Mammary epithelial cell (primary cell): ENCODE measurements at regions of chr6 and their contacts with region 1.

Region 1: GRCh38 chr6:3281631-3282475 is 23.1 kb downstream of the PSMG4 start:
- DNase-seq: peak; percentile 92
- H3K4me3 ChIP-seq: no peak overlapping the region
- H3K27ac ChIP-seq: no peak overlapping the region
- H3K4me1 ChIP-seq: peaks cover 15% of the 10 kb centered on the region
- H3K27me3 ChIP-seq: no peaks in the 10 kb centered on the region
- CTCF ChIP-seq: peak in 1 of 2 donors; percentile 7

Region 2: GRCh38 chr6:3324262-3324942 is 42.5 kb after region 1 on chr6:
- CTCF ChIA-PET with region 1: no interaction called
- dilution Hi-C with region 1: no loop called
- in situ Hi-C with region 1: no loop called
- intact Hi-C with region 1: no loop called
- DNase-seq: peak; percentile 93
- H3K4me3 ChIP-seq: no peak overlapping the region
- H3K27ac ChIP-seq: peak overlapping the region; percentile 13
- H3K4me1 ChIP-seq: peaks cover 21% of the 10 kb centered on the region
- H3K27me3 ChIP-seq: no peaks in the 10 kb centered on the region
- CTCF ChIP-seq: no peak

Region 3: GRCh38 chr6:3351105-3351676 is 69.3 kb after region 1 on chr6:
- CTCF ChIA-PET with region 1: no interaction called
- dilution Hi-C with region 1: loop called (anchors 5 kb)
- in situ Hi-C with region 1: no loop called
- intact Hi-C with region 1: no loop called
- DNase-seq: no peak
- H3K4me3 ChIP-seq: no peak overlapping the region
- H3K27ac ChIP-seq: no peak overlapping the region
- H3K4me1 ChIP-seq: peaks cover 6% of the 10 kb centered on the region
- H3K27me3 ChIP-seq: no peaks in the 10 kb centered on the region
- CTCF ChIP-seq: no peak

Region 4: DNA sequence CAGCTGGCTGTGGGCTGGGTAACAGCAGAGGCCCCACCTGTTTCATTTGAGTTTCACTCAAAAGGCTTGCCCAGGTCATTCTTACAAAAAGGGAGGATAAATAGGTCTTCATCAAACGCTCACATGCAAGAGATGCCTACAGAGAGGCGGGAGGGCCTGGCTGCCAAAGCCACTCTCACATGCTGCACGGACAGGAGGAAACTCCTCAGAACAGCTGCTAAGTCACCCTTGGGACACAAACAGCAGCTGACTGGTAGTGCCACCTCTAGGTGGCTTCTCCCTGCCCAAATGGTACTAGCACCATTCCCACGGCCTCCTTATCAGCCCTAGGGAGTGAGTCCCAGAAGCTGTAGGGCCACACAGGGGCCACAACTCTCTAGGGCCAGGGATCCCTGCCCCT is 151.2 kb after region 1 on chr6:
- CTCF ChIA-PET with region 1: no interaction called
- dilution Hi-C with region 1: no loop called
- in situ Hi-C with region 1: no loop called
- intact Hi-C with region 1: loop called (anchors 1 kb)
- DNase-seq: no peak
- H3K4me3 ChIP-seq: peak overlapping the region in 1 of 3 experiments; percentile 12
- H3K27ac ChIP-seq: peak overlapping the region; percentile 64
- H3K4me1 ChIP-seq: peaks cover 41% of the 10 kb centered on the region
- H3K27me3 ChIP-seq: no peaks in the 10 kb centered on the region
- CTCF ChIP-seq: no peak

Region 5: DNA sequence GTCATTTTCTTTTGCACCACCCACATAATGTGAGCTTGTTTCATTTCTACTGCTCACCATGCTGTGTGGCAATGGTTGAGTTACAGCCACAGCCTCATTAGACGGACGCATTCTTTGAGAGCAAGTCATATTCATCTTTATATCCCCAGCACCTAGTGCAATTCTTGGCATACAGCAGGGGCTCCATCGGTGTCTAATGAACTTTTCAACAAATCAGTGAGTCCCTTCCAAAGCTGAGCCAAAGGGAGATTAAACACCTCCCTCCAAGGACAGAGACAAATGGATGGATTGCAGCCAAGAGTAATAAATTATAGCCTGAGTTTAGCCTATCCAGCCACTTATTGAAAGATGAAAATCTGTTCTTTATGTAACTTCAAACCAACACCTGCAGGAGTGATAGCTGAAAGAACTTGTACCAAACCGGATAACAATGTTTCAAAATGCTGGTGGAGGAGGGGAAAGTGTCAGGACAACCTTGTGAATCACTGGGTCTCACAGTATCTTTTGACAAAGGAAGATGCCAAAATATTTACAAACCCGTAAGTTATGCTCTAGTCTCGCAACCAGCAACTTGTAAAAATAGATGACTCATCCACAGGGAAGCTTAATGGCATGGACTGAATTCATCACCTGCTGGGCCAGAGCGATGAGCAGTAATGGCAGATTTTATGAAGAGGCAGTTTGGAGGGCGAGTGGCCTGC is 330.6 kb after region 1 on chr6:
- CTCF ChIA-PET with region 1: no interaction called
- dilution Hi-C with region 1: no loop called
- in situ Hi-C with region 1: no loop called
- intact Hi-C with region 1: loop called (anchors 2 kb)
- DNase-seq: peak; percentile 95
- H3K4me3 ChIP-seq: no peak overlapping the region
- H3K27ac ChIP-seq: peak overlapping the region; percentile 69
- H3K4me1 ChIP-seq: peaks cover 31% of the 10 kb centered on the region
- H3K27me3 ChIP-seq: no peaks in the 10 kb centered on the region
- CTCF ChIP-seq: no peak

Region 6: GRCh38 chr6:3732345-3733141 is 450.7 kb after region 1 on chr6:
- CTCF ChIA-PET with region 1: interaction called, 4 read pairs
- dilution Hi-C with region 1: no loop called
- in situ Hi-C with region 1: loop called (anchors 5 kb)
- intact Hi-C with region 1: loop called (anchors 1 kb)
- DNase-seq: peak; percentile 70
- H3K4me3 ChIP-seq: no peak overlapping the region
- H3K27ac ChIP-seq: no peak overlapping the region
- H3K4me1 ChIP-seq: peaks cover 12% of the 10 kb centered on the region
- H3K27me3 ChIP-seq: no peaks in the 10 kb centered on the region
- CTCF ChIP-seq: peak; percentile 68 to 98

Region 7: GRCh38 chr6:3977875-3978711 is 696.2 kb after region 1 on chr6:
- CTCF ChIA-PET with region 1: interaction called, 4 read pairs
- dilution Hi-C with region 1: loop called (anchors 25 kb)
- in situ Hi-C with region 1: no loop called
- intact Hi-C with region 1: no loop called
- DNase-seq: peak; percentile 56
- H3K4me3 ChIP-seq: no peak overlapping the region
- H3K27ac ChIP-seq: no peak overlapping the region
- H3K4me1 ChIP-seq: no peaks in the 10 kb centered on the region
- H3K27me3 ChIP-seq: no peaks in the 10 kb centered on the region
- CTCF ChIP-seq: peak; percentile 50 to 59

Region 8: GRCh38 chr6:3997177-3997770 is 715.4 kb after region 1 on chr6:
- CTCF ChIA-PET with region 1: interaction called, 14 read pairs
- dilution Hi-C with region 1: loop called (anchors 25 kb)
- in situ Hi-C with region 1: loop called in 1 of 2 experiments (anchors 25 kb)
- intact Hi-C with region 1: no loop called
- DNase-seq: peak; percentile 35
- H3K4me3 ChIP-seq: no peak overlapping the region
- H3K27ac ChIP-seq: peak overlapping the region; percentile 24
- H3K4me1 ChIP-seq: peaks cover 11% of the 10 kb centered on the region
- H3K27me3 ChIP-seq: no peaks in the 10 kb centered on the region
- CTCF ChIP-seq: no peak